BJ (cell line): ENCODE measurements at regions of chr11 and their contacts with region 1.

Region 1: GRCh38 chr11:67401495-67402191 is at the start of gene PPP1CA:
- DNase-seq: peak; percentile 27
- H3K4me3 ChIP-seq: peak within 1 kb of the TSS; percentile 98
- H3K27me3 ChIP-seq: no peaks in the 10 kb centered on the region
- CTCF ChIP-seq: 0 out of 2 replicates have a peak, but pooled peaks have one; percentile 7
- polyA plus RNA-seq, gene PPP1CA: 146 and 233 TPM in 2 replicates

Region 2: GRCh38 chr11:67053896-67054842 is 347.5 kb before region 1 on chr11:
- CTCF ChIA-PET with region 1: no interaction called
- POLR2A ChIA-PET with region 1: interaction called, 12 read pairs
- DNase-seq: no peak
- H3K4me3 ChIP-seq: no peak overlapping the region
- H3K27me3 ChIP-seq: peaks cover 2% of the 10 kb centered on the region; the same call in 1 of the 2 replicates
- CTCF ChIP-seq: peak; percentile 91

Region 3: GRCh38 chr11:67288452-67289225 is 113.0 kb before region 1 on chr11:
- CTCF ChIA-PET with region 1: no interaction called
- POLR2A ChIA-PET with region 1: no interaction called
- DNase-seq: no peak
- H3K4me3 ChIP-seq: peak overlapping the region; percentile 94
- H3K27me3 ChIP-seq: no peaks in the 10 kb centered on the region
- CTCF ChIP-seq: no peak

Region 4: DNA sequence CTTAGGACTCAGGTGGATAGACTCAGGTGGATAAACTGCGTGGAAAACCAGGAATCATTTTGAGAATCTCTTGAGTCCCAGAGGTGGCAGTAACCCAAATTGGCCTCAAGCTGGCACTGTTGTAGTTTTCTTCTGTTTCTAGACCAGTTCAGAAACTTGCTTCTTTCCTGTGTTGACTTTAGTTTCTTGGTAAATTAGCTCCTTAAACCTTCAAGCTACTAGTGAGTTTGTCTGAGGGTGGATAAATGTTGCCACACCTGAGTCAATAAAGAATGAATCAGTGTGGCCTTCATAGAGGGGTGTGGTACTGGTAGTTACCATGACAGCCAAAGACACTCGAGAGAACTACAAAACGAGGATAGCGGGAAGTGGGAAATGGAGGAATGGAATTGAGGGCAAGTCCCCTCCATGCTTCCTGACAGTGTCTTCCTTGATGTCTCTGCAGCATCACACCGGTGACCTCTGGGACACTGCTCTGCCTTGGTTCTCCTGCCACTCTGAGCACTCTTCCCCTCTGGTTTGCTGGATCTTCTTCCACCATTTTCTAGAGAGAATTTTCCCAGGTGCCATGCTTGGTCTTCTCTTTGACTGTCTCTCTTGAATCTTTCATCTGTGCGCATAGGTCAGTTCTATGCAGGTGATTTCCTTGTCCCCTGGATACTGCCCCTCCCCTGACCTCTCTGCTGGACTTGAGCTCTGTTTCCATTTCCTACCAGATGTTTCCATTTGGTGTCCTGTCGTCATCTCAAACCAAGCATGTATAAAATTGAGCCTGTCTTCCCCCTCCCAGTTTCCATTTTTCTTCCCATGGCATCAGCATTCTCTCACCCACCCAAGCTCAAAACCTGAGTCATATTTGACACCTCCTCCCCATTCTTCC is 55.5 kb before region 1 on chr11:
- CTCF ChIA-PET with region 1: interaction called, 10 read pairs
- POLR2A ChIA-PET with region 1: interaction called, 29 read pairs
- DNase-seq: no peak
- H3K4me3 ChIP-seq: no peak overlapping the region
- H3K27me3 ChIP-seq: no peaks in the 10 kb centered on the region
- CTCF ChIP-seq: peak; percentile 81

Region 5: DNA sequence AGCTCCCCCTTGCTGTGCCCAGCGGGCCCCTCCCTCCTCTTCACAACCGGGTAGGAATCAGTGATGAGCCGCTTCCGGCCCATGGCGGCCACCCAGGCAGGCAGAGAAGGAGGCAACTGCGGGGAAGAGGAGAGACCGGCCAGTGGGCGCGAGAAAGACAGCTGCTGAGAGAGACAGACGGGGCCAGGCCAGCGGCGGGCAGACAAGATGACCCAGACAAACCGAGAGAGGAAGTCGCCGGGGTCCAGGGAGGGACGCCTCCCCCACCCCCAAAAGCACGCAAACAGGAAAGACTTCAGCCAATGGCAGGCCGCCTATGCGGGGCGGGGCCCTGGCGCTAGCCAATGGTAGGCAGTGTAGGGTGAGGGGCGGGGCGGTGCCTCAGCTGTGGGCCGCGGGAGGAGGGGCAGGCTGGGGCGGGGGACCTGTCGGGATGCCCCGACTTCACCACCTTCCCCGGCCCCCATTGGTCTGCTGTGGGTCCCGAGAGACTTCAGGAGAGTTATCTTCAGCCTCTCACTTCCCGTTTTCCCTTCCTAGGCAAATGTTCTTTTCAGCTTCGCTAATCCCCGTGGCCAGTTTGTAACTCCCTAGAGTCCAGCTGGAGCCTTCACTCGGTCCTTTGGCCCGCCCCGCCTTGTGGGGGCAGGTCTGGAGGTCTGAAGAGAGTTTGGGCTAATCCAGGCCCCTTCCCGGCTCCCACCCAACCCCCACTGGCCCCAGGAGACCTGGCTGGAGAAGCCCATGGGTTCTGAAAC is 48.1 kb before region 1 on chr11 and contains the start of gene POLD4:
- CTCF ChIA-PET with region 1: interaction called, 10 read pairs
- POLR2A ChIA-PET with region 1: interaction called, 29 read pairs
- DNase-seq: peak; percentile 74
- H3K4me3 ChIP-seq: peak within 1 kb of the TSS; percentile 78
- H3K27me3 ChIP-seq: no peaks in the 10 kb centered on the region
- CTCF ChIP-seq: no peak
- polyA plus RNA-seq, gene POLD4: 95.6 and 119 TPM in 2 replicates

Region 6: GRCh38 chr11:67373925-67374618 is 27.6 kb before region 1 on chr11:
- CTCF ChIA-PET with region 1: interaction called, 16 read pairs
- POLR2A ChIA-PET with region 1: interaction called, 23 read pairs
- DNase-seq: peak; percentile 89
- H3K4me3 ChIP-seq: peak overlapping the region; percentile 72
- H3K27me3 ChIP-seq: no peaks in the 10 kb centered on the region
- CTCF ChIP-seq: peak; percentile 45

Region 7: DNA sequence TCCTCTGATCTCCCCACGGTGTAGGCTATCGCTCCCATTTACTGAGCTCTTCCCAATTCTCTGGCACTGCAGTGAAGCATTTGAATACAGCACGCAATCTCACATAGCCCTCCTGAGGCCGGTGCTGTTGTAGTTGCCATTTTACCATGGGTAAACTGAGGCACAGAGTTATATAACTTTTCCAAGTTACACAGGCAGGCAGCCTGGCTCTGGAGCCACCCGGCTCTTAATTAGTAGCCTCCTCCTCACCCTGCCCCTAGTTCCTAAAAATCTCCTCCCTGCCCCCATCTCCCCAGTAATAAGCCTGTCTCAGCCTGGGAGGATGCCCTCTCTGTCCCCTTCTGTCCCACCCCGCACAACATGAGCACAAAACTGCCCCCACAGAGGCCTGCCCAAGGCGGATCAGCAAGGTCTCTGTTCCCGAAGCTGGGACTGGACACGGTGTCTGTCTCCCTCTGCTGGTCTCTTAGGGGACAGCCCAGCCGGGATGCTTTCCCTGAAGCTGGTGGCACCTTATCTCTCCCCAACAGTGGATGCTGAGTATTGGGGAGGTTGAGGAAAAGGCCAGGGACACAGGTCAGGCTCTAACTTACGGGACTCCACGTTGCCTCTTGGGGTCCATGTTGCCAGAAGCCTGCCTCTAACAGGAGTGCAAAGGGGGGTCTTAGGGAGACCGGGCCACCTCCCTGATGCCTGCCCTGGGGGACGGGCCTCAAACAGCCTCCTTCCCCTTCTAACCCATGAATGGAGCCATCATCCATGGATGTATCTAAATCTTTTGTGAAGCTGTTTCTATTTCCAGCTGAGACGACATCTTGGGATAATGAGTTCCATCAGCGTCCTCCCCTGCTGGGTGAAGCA is 19.1 kb before region 1 on chr11:
- CTCF ChIA-PET with region 1: interaction called, 16 read pairs
- POLR2A ChIA-PET with region 1: no interaction called
- DNase-seq: no peak
- H3K4me3 ChIP-seq: no peak overlapping the region
- H3K27me3 ChIP-seq: no peaks in the 10 kb centered on the region; the same call in 1 of the 2 replicates
- CTCF ChIP-seq: peak; percentile 99

Region 8: DNA sequence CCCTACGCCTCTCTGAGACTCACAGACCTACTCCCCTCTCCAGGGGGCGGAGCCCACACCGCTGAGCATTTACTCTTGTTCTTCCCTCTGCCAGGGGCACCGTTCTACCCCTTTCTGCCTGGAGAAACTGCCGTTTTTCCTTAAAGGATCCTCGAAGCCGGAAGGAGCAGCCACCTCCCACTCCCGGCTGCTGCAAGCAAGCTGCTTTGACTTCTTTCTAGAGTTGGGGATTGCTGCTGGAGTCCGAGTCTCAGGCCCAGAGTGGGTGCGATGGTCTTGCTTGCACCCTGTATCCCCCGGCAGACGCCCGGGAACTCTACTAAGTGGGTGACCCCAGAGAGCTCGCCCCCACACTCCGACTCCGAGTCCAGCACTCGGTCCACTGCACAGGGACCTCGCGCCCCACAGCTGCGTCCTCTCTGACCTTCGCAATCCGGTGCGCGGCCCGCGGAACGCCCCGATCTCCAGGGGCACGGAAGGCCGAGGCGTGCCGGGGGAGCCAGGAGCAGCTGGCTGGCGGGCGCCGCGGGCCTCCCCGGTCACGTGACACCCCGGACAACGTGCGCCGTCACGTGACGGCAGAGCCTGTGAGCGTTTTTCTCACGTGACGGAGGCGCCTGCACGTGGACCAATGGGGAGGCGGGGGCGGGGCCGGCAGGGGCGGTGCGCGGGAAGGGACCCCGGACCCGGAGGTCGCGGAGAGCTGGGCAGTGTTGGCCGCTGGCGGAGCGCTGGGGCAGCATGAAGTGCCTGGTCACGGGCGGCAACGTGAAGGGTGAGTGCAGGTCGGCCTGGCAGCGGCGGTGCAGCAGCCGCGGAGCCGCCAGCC is 10.1 kb before region 1 on chr11 and contains the start of gene RAD9A:
- CTCF ChIA-PET with region 1: interaction called, 12 read pairs
- POLR2A ChIA-PET with region 1: interaction called, 9 read pairs
- DNase-seq: no peak
- H3K4me3 ChIP-seq: peak within 1 kb of the TSS; percentile 92
- H3K27me3 ChIP-seq: no peaks in the 10 kb centered on the region; the same call in 1 of the 2 replicates
- CTCF ChIP-seq: no peak
- polyA plus RNA-seq, gene RAD9A: 5.9 and 10.7 TPM in 2 replicates